GM12878 (cell line): ENCODE measurements at regions of chr6 and their contacts with region 1.

Region 1: GRCh38 chr6:124573953-124574352 is 388.3 kb upstream of the RNF217 start:
- DNase-seq: no peak
- ATAC-seq: no peak
- H3K4me3 ChIP-seq: no peak overlapping the region
- H3K27ac ChIP-seq: no peak overlapping the region
- H3K4me1 ChIP-seq: no peaks in the 10 kb centered on the region
- H3K27me3 ChIP-seq: no peaks in the 10 kb centered on the region
- CTCF ChIP-seq: no peak
- EP300 ChIP-seq: no peak
- POLR2A ChIP-seq: no peak
- RAD21 ChIP-seq: no peak

Region 2: DNA sequence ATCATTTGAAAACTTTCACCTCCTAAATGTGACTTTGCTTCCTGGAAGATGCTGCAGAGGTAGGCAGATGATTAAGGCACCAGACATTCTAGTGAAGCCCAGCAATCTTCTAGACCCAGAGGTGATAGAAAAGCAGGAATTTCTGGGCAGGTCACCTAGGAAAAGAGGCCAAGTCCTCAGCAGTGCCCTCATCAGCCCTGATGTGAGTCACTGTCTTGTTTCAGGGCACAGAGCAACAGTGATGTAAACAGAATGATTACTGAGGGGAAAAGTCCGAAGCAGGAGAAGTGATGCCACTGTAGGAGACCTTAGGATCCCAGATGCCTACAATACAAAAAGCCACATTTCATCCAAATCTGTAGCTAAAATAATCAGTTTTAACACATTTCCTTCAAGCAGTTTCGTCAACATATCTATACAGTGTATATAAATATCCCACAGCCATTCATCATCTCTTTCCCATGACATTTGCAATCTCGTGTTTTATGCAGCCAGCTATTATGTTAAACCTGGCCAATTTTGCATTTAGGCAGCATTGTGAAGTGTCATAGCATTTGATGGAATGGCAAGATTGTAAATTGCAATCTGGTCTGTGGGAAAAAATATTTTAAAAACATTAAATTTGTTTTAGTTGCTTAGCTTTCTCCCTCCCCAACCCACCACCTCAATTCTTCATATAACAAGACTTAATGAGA is 12.9 kb before region 1 on chr6:
- CTCF ChIA-PET with region 1: no interaction called
- POLR2A ChIA-PET with region 1: no interaction called
- RAD21 ChIA-PET with region 1: no interaction called
- SMC1A ChIA-PET with region 1: no interaction called
- in situ Hi-C with region 1: no loop called
- intact Hi-C with region 1: no loop called
- DNase-seq: no peak
- ATAC-seq: no peak
- H3K4me3 ChIP-seq: no peak overlapping the region
- H3K27ac ChIP-seq: no peak overlapping the region
- H3K4me1 ChIP-seq: no peaks in the 10 kb centered on the region
- H3K27me3 ChIP-seq: no peaks in the 10 kb centered on the region
- CTCF ChIP-seq: no peak
- EP300 ChIP-seq: no peak
- POLR2A ChIP-seq: no peak
- RAD21 ChIP-seq: no peak

Region 3: DNA sequence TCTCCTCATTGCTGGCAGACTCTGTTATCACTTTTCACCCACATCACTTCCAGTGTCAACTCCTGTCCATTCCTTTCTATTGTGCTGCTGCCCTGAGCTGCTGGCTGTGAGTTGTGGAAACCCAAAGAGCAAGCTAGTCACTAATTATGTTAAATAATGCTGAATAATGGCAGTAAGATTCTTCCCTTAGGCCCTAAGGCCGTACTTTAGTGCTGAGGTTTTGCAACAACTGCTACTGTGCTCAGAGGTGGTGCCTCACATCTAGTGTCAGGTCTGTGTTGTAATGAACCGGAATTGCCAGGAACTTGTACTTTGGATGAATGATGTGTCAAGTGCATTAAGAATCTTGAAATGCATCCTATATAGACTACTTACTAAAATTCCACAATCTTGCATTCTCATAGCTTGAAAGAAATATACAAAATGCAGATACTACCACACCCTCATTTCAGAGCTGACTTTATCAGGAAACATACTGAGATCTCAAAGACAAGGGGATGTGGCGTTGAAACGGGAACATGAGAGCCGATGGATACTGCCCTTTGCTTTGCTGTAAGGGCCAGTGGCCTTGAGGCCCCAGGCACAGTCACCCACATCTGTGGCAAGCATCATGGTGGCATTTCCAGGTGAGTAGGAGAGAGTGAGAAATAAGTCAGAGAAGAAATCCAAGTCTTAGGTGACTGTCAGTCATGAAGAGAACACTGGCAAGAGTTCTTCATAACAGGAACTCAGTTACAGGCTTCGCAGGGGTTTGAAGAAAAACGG is 16.2 kb after region 1 on chr6:
- CTCF ChIA-PET with region 1: no interaction called
- POLR2A ChIA-PET with region 1: no interaction called
- RAD21 ChIA-PET with region 1: no interaction called
- SMC1A ChIA-PET with region 1: no interaction called
- in situ Hi-C with region 1: no loop called
- intact Hi-C with region 1: loop called (anchors 2 kb)
- DNase-seq: no peak
- ATAC-seq: no peak
- H3K4me3 ChIP-seq: no peak overlapping the region
- H3K27ac ChIP-seq: no peak overlapping the region
- H3K4me1 ChIP-seq: no peaks in the 10 kb centered on the region
- H3K27me3 ChIP-seq: no peaks in the 10 kb centered on the region
- CTCF ChIP-seq: no peak
- EP300 ChIP-seq: no peak
- POLR2A ChIP-seq: no peak
- RAD21 ChIP-seq: no peak